ENCODE measurements at regions of chr18 and their contacts with region 1.

Region 1: GRCh38 chr18:11040823-11041656 is 108.3 kb downstream of the PIEZO2 start:
- DNase-seq: no peak
- ATAC-seq: peak; percentile 75
- H3K4me3 ChIP-seq: no peak overlapping the region
- H3K27ac ChIP-seq: peak overlapping the region; percentile 52
- H3K4me1 ChIP-seq: peaks cover 30% of the 10 kb centered on the region
- H3K27me3 ChIP-seq: no peaks in the 10 kb centered on the region
- CTCF ChIP-seq: peak; percentile 67 to 74 (median 69); a peak in 5 of 6 replicates
- EP300 ChIP-seq: no peak
- POLR2A ChIP-seq: no peak
- RAD21 ChIP-seq: peak; percentile 88

Region 2: DNA sequence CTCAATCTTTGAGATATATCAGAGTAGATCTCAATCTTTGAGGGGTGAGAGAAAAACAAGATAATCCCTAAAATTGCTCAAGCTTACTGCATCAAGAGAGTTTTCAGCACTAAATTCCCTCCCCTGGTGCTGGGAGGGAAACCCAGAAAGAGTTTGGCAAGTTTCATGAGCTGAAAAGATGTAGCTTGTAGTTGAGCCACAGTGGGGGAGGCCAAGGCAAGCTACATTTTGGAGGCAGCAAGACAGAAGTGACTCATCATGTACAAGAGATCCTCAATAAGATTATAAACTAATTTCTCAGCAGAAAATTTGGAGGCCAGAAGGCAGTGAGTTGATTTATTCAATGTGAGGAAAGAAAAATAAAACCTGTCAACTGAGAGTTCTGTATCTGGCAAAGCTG is 199.8 kb before region 1 on chr18:
- CTCF ChIA-PET with region 1: interaction called, 11 read pairs
- POLR2A ChIA-PET with region 1: no interaction called
- RAD21 ChIA-PET with region 1: interaction called, 3 read pairs
- SMC1A ChIA-PET with region 1: interaction called, 20 read pairs
- in situ Hi-C with region 1: no loop called
- intact Hi-C with region 1: no loop called
- DNase-seq: no peak
- ATAC-seq: no peak
- H3K4me3 ChIP-seq: no peak overlapping the region
- H3K27ac ChIP-seq: peak overlapping the region; percentile 13; the same call in 1 of the 2 replicates
- H3K4me1 ChIP-seq: peaks cover 15% of the 10 kb centered on the region
- H3K27me3 ChIP-seq: no peaks in the 10 kb centered on the region
- CTCF ChIP-seq: no peak
- EP300 ChIP-seq: no peak
- POLR2A ChIP-seq: no peak
- RAD21 ChIP-seq: no peak

Region 3: GRCh38 chr18:10892786-10893185 is 148.3 kb before region 1 on chr18:
- CTCF ChIA-PET with region 1: interaction called, 8 read pairs
- POLR2A ChIA-PET with region 1: interaction called, 3 read pairs
- RAD21 ChIA-PET with region 1: interaction called, 8 read pairs
- SMC1A ChIA-PET with region 1: interaction called, 20 read pairs
- in situ Hi-C with region 1: no loop called
- intact Hi-C with region 1: no loop called
- DNase-seq: no peak
- ATAC-seq: peak; percentile 29; the same call in 1 of the 3 replicates
- H3K4me3 ChIP-seq: no peak overlapping the region
- H3K27ac ChIP-seq: no peak overlapping the region
- H3K4me1 ChIP-seq: peaks cover 13% of the 10 kb centered on the region
- H3K27me3 ChIP-seq: no peaks in the 10 kb centered on the region
- CTCF ChIP-seq: no peak
- EP300 ChIP-seq: no peak
- POLR2A ChIP-seq: no peak
- RAD21 ChIP-seq: no peak

Region 4: GRCh38 chr18:10965119-10965518 is 75.9 kb before region 1 on chr18:
- CTCF ChIA-PET with region 1: interaction called, 6 read pairs
- POLR2A ChIA-PET with region 1: interaction called, 3 read pairs
- RAD21 ChIA-PET with region 1: interaction called, 18 read pairs
- SMC1A ChIA-PET with region 1: interaction called, 118 read pairs
- in situ Hi-C with region 1: no loop called
- intact Hi-C with region 1: no loop called
- DNase-seq: no peak
- ATAC-seq: no peak
- H3K4me3 ChIP-seq: no peak overlapping the region
- H3K27ac ChIP-seq: no peak overlapping the region
- H3K4me1 ChIP-seq: no peaks in the 10 kb centered on the region
- H3K27me3 ChIP-seq: no peaks in the 10 kb centered on the region
- CTCF ChIP-seq: no peak
- EP300 ChIP-seq: no peak
- POLR2A ChIP-seq: no peak
- RAD21 ChIP-seq: no peak

Region 5: DNA sequence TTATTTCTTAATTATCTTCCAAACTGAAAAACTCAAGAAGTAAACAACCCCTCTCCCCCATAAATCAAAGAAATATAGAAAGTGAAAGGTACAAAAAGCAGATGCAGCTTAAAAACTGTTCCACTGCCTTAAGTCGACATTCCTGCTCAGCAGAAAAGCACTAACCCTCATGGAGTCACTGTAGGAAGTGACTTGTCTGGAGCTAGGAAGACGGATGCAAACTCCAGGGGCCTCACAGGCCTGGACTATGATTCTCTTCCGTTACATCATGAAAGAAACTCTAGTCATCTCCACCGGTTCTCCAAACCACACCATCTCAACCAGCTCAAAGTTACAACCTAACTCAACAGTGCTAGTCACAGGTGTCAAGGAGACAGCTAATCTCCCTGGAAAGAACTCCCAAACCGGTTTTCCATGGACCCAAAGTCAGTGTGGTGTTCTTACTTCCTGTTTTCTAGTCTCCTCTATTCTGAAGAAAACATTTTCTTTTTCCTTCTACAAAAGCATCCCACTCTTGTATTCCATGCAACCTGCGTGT is 20.1 kb before region 1 on chr18:
- CTCF ChIA-PET with region 1: interaction called, 49 read pairs
- POLR2A ChIA-PET with region 1: interaction called, 6 read pairs
- RAD21 ChIA-PET with region 1: interaction called, 24 read pairs
- SMC1A ChIA-PET with region 1: interaction called, 18 read pairs
- in situ Hi-C with region 1: no loop called
- intact Hi-C with region 1: no loop called
- DNase-seq: no peak
- ATAC-seq: peak; percentile 59
- H3K4me3 ChIP-seq: peak overlapping the region; percentile 53; the same call in 1 of the 2 replicates
- H3K27ac ChIP-seq: peak overlapping the region; percentile 54
- H3K4me1 ChIP-seq: peaks cover 34% of the 10 kb centered on the region
- H3K27me3 ChIP-seq: no peaks in the 10 kb centered on the region
- CTCF ChIP-seq: no peak
- EP300 ChIP-seq: no peak
- POLR2A ChIP-seq: no peak
- RAD21 ChIP-seq: no peak

Region 6: DNA sequence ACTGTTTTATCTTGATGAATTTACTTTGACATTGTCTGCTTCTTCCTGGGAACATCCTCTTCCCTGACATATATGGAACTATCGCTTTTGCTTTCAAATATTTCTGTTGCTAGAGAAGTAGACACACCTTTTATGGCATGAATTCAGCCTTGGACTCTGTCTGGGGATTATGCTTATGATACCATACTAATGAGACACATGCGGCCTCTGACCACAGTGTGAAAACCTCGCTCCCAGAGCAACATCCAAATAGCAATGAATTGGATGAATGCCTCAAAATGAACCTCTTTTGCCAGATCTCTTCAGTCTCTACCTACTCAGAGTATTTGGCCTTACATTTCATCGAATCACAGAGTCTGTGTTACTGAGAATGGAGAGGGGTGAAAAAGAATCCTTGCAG is 37.5 kb after region 1 on chr18:
- CTCF ChIA-PET with region 1: interaction called, 8 read pairs
- POLR2A ChIA-PET with region 1: interaction called, 6 read pairs
- RAD21 ChIA-PET with region 1: interaction called, 8 read pairs
- SMC1A ChIA-PET with region 1: interaction called, 10 read pairs
- in situ Hi-C with region 1: no loop called
- intact Hi-C with region 1: no loop called
- DNase-seq: peak; percentile 46
- ATAC-seq: peak; percentile 87
- H3K4me3 ChIP-seq: no peak overlapping the region; the same call in 1 of the 2 replicates
- H3K27ac ChIP-seq: peak overlapping the region; percentile 66
- H3K4me1 ChIP-seq: peaks cover 27% of the 10 kb centered on the region
- H3K27me3 ChIP-seq: no peaks in the 10 kb centered on the region
- CTCF ChIP-seq: no peak
- EP300 ChIP-seq: peak; percentile 64 to 78; a peak in 3 of 4 replicates
- POLR2A ChIP-seq: no peak
- RAD21 ChIP-seq: no peak

Measured in GM12878 (cell line).